Activated B cell treated with CpG ODN at 0.5 μM for 24 hours (primary cell): ENCODE measurements at regions of chr3 and their contacts with region 1.

Region 1: GRCh38 chr3:143024351-143024960 is 23.1 kb downstream of the U2SURP start:
- DNase-seq: no peak
- ATAC-seq: no peak
- H3K4me3 Mint-ChIP-seq: no peak overlapping the region
- H3K27ac Mint-ChIP-seq: no peak overlapping the region
- H3K4me1 Mint-ChIP-seq: no peaks in the 10 kb centered on the region
- H3K27me3 Mint-ChIP-seq: no peaks in the 10 kb centered on the region
- CTCF ChIP-seq: no peak

Region 2: GRCh38 chr3:143040261-143040879 is 15.9 kb after region 1 on chr3:
- CTCF ChIA-PET with region 1: interaction called, 4 read pairs
- POLR2A ChIA-PET with region 1: no interaction called
- intact Hi-C with region 1: loop called (anchors 2 kb)
- DNase-seq: no peak
- ATAC-seq: no peak
- H3K4me3 Mint-ChIP-seq: no peak overlapping the region
- H3K27ac Mint-ChIP-seq: no peak overlapping the region
- H3K4me1 Mint-ChIP-seq: peaks cover 3% of the 10 kb centered on the region
- H3K27me3 Mint-ChIP-seq: no peaks in the 10 kb centered on the region
- CTCF ChIP-seq: no peak